ENCODE measurements at regions of chr22 and their contacts with region 1.

Region 1: DNA sequence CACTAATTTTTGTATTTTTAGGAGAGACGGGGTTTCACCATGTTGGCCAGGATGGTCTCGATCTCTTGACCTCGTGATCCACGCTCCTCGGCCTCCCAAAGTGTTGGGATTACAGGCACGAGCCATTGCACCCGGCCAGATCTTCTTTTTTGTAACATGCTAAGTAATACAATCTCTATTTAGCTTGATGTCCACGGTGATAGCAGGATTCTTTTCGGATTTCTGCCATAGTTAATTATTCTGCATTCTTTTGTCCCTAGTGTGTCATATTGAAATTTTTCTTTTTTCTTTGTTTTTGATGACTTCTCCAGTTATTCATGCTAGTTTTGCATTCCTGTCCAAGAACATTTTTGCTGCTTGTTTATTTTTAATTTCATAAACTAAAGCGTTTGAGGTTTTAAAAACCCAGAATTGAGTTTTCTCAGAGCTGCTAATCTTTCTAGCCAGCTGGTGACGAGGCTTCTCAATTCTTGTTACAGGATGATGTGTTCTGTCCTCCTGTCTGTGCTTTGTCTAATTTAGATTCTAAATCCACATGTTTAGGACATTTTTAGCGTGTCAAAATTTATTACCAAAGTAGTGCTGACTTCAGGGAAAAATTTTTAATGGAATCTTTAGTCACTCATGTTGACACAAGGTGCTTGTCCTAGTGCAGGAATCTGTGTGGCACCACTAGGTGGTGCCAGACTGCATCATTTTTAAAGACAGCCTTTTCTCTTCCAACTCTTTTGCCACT is 21.8 kb downstream of the NF2 start:
- DNase-seq: peak; percentile 55
- ATAC-seq: no peak
- H3K4me3 Mint-ChIP-seq: no peak overlapping the region
- H3K27ac Mint-ChIP-seq: peak overlapping the region; percentile 14
- H3K4me1 Mint-ChIP-seq: peaks cover 57% of the 10 kb centered on the region
- H3K27me3 Mint-ChIP-seq: no peaks in the 10 kb centered on the region

Region 2: DNA sequence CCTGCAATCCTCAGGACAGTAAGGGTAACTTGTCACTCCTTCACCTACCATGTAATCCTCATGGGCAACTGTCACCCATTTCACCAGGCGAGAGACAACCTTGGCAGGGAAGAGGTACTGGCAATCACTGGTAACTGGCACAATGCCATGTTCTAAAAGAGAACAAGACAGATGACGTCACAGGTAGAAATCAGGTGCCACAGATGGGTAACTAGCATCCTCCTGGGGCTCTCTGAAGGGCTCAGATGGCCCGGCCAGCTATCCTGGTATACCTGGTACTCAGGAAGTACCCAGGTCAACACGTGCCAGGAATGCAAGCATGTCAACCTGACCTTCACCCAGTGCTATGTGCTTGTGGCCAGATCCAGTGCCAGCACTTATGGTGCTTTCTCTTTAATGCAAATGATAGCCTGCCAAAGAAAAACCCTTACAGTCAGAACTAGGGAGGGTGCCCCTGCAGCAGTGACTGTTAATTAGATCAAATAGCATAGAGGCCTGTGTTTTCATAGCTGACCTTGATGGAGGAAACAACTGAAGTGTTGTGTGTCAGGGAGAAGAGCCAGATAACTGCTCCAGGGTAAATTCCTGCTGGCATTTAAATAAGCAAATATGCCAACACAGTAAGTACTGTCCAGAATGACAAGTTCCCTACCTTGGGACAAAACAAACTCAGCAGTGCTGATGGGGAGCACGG is 107.9 kb before region 1 on chr22:
- CTCF ChIA-PET with region 1: no interaction called
- POLR2A ChIA-PET with region 1: no interaction called
- DNase-seq: no peak
- ATAC-seq: no peak
- H3K4me3 Mint-ChIP-seq: no peak overlapping the region
- H3K27ac Mint-ChIP-seq: no peak overlapping the region
- H3K4me1 Mint-ChIP-seq: no peaks in the 10 kb centered on the region
- H3K27me3 Mint-ChIP-seq: no peaks in the 10 kb centered on the region

Region 3: DNA sequence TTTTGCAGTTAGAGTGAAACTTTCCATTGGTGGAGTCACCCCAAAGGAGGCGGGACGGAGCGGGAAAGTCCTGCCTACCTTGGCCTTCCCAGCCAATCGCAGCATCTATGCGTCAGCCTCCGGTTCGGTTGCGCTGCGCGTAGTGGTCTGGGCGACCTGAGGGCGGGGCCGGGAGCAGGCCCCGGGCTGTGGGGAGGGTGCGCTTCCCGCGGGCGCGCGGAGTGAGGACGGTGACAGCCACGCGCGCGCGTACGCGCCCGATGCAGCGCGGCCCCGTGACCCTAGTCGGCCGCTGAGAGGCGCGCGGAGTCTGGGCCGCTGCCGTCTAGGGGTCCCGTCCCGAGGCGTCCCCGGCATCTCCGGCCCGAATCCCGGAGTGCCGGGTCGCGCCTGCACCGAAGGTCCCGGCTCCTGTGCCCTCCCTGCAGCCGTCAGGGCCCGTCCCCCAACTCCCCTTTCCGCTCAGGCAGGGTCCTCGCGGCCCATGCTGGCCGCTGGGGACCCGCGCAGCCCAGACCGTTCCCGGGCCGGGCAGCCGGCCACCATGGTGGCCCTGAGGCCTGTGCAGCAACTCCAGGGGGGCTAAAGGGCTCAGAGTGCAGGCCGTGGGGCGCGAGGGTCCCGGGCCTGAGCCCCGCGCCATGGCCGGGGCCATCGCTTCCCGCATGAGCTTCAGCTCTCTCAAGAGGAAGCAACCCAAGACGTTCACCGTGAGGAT is 21.7 kb before region 1 on chr22 and contains the start of gene NF2:
- CTCF ChIA-PET with region 1: interaction called, 49 read pairs
- POLR2A ChIA-PET with region 1: interaction called, 9 read pairs
- DNase-seq: peak; percentile 99
- ATAC-seq: peak; percentile 98
- H3K4me3 Mint-ChIP-seq: peak within 1 kb of the TSS; percentile 95
- H3K27ac Mint-ChIP-seq: peak within 1 kb of the TSS; percentile 94
- H3K4me1 Mint-ChIP-seq: peaks cover 25% of the 10 kb centered on the region
- H3K27me3 Mint-ChIP-seq: no peaks in the 10 kb centered on the region
- total RNA-seq, gene NF2: 60.6 to 61.2 TPM

Region 4: GRCh38 chr22:29635734-29636357 is 10.6 kb after region 1 on chr22:
- CTCF ChIA-PET with region 1: interaction called, 61 read pairs
- POLR2A ChIA-PET with region 1: no interaction called
- DNase-seq: no peak
- ATAC-seq: peak; percentile 59
- H3K4me3 Mint-ChIP-seq: no peak overlapping the region
- H3K27ac Mint-ChIP-seq: no peak overlapping the region
- H3K4me1 Mint-ChIP-seq: peaks cover 31% of the 10 kb centered on the region
- H3K27me3 Mint-ChIP-seq: no peaks in the 10 kb centered on the region

Region 5: GRCh38 chr22:29663180-29663821 is 38.0 kb after region 1 on chr22:
- CTCF ChIA-PET with region 1: interaction called, 10 read pairs
- POLR2A ChIA-PET with region 1: no interaction called
- DNase-seq: no peak
- ATAC-seq: no peak
- H3K4me3 Mint-ChIP-seq: no peak overlapping the region
- H3K27ac Mint-ChIP-seq: no peak overlapping the region
- H3K4me1 Mint-ChIP-seq: peaks cover 4% of the 10 kb centered on the region
- H3K27me3 Mint-ChIP-seq: no peaks in the 10 kb centered on the region

Region 6: DNA sequence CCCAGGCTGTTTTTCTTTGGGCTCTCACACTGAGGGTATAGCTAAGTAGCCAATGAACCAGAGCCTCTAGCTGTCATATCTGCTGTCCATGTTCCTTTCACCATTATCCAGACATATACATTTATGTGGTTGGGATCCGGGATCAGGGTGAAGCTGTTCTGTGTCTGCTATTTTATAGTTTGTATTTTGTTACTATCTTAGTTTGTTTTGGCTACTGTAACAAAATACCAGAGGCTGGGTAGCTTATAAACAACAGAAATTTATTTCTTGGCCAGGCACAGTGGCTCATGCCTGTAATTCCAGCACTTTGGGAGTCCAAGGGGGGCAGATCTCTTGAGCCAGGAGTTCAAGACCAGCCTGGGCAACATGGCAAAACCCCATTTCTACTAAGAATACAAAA is 54.1 kb after region 1 on chr22:
- CTCF ChIA-PET with region 1: no interaction called
- POLR2A ChIA-PET with region 1: no interaction called
- DNase-seq: no peak
- ATAC-seq: no peak
- H3K4me3 Mint-ChIP-seq: no peak overlapping the region
- H3K27ac Mint-ChIP-seq: no peak overlapping the region
- H3K4me1 Mint-ChIP-seq: no peaks in the 10 kb centered on the region
- H3K27me3 Mint-ChIP-seq: no peaks in the 10 kb centered on the region

Region 7: DNA sequence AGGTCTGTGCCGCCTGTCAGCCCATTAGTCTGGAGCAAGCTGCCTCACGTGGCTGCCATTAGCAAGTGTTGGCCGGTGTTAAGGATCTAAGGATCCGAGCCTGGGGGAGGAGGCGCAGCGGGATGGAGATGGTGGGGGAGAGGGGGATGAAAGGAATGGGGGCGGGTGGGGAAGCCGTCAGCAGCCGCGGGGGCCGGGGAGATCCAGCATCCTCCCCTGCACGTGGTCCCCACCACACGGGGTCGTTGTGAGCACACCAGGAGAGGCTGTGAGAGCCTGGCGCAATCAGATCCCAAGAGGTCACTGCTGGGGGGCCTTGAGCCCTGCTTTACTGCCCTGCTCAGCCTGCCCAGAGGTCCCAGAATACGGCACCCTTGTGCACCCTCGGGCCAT is 101.9 kb after region 1 on chr22:
- CTCF ChIA-PET with region 1: no interaction called
- POLR2A ChIA-PET with region 1: no interaction called
- DNase-seq: peak; percentile 40
- ATAC-seq: peak; percentile 35
- H3K4me3 Mint-ChIP-seq: no peak overlapping the region
- H3K27ac Mint-ChIP-seq: no peak overlapping the region
- H3K4me1 Mint-ChIP-seq: no peaks in the 10 kb centered on the region
- H3K27me3 Mint-ChIP-seq: peaks cover 7% of the 10 kb centered on the region